ENCODE measurements at regions of chr18 and their contacts with region 1.

Region 1: GRCh38 chr18:58183226-58183625 is 139.2 kb downstream of the NEDD4L start:
- DNase-seq: peak in 1 of 2 donors; percentile 73
- H3K4me3 ChIP-seq: no peak overlapping the region
- H3K27ac ChIP-seq: peak overlapping the region in 1 of 2 donors; percentile 0
- H3K4me1 ChIP-seq: no peaks in the 10 kb centered on the region
- H3K27me3 ChIP-seq: no peaks in the 10 kb centered on the region
- CTCF ChIP-seq: no peak
- POLR2A ChIP-seq: no peak

Region 2: GRCh38 chr18:57881818-57882413 is 301.3 kb before region 1 on chr18:
- intact Hi-C with region 1: no loop called
- DNase-seq: peak; percentile 38 to 60
- H3K4me3 ChIP-seq: no peak overlapping the region
- H3K27ac ChIP-seq: no peak overlapping the region
- H3K4me1 ChIP-seq: no peaks in the 10 kb centered on the region
- H3K27me3 ChIP-seq: no peaks in the 10 kb centered on the region
- CTCF ChIP-seq: peak; percentile 75 to 91 (median 89)
- POLR2A ChIP-seq: no peak

Region 3: DNA sequence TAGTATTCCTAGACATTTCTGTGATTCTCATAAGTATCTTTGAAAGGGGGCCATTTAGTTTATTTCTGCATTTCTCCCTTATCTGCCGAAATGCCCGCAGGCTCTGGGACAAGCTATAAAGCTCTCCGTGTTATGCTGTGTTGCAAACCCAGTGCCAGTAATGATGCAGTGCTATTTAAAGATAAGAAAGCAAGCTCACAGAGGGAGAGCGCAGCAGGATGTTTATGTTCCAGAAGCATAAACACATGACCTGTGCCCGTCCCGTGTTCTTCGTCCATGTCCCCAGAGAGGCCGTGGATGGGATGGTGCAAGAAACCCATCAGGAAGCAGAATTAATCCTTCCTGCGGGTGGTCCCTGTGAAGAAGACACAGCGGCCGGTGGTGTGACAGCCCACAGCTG is 39.8 kb before region 1 on chr18:
- intact Hi-C with region 1: loop called (anchors 1 kb)
- DNase-seq: no peak
- H3K4me3 ChIP-seq: no peak overlapping the region
- H3K27ac ChIP-seq: no peak overlapping the region
- H3K4me1 ChIP-seq: no peaks in the 10 kb centered on the region
- H3K27me3 ChIP-seq: no peaks in the 10 kb centered on the region
- CTCF ChIP-seq: no peak
- POLR2A ChIP-seq: no peak